Endothelial cell of umbilical vein (primary cell): ENCODE measurements at regions of chr2 and their contacts with region 1.

Region 1: DNA sequence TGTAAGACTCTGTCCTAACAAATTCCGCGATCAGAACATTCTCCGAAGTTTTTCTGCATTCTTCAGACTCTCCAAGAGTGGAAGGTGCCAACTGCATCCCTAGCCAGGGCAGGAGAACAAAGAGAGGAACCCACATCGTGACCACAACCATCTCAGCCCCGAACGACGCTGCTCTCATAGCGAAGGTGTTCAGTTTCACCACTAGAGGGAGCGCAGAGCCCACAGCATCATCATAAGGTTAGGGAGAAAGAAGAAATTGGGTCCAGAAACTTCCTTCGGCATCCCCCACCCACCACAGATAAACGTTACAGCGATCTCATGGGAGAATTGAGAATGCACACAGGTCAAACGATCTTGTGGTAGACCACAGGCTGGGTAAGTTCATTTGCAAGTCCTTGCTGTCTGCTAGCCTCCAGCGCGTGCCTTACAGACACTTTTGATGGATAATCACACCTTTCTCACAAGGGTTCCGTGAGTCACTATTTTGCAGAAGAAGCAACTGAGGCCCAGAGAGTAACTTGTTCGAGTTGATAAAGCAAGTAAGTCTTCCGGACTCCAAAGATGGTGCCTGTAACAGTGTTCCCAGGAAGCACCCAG is 53.7 kb upstream of the ARL4C start:
- DNase-seq: peak; percentile 76
- H3K4me3 ChIP-seq: no peak overlapping the region
- H3K27ac ChIP-seq: no peak overlapping the region
- H3K4me1 ChIP-seq: no peaks in the 10 kb centered on the region
- H3K27me3 ChIP-seq: peaks cover 0 to 6% of the 10 kb centered on the region in 2 experiments
- CTCF ChIP-seq: peak; percentile 84 to 87
- POLR2A ChIP-seq: no peak

Region 2: DNA sequence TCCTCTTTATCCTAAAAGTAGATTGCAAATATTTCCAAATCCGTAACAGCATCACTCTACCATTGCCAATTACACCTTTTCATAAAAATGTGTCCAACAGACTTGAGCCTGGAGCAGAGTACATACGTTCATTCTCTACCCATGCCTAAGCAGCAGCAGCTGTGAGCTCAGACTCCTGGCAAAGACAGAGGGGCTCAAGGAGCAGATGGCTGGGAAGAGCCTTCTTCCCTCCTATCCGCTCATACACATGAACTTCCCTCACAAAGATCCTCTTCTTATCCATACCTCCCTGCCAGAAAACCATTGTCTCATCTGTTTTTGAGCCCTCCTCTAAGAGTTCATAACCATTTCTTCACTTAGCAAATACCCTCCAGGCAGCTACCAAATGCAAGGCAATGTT is 110.6 kb after region 1 on chr2:
- CTCF ChIA-PET with region 1: no interaction called
- POLR2A ChIA-PET with region 1: no interaction called
- dilution Hi-C with region 1: no loop called
- intact Hi-C with region 1: no loop called
- DNase-seq: no peak
- H3K4me3 ChIP-seq: no peak overlapping the region
- H3K27ac ChIP-seq: no peak overlapping the region
- H3K4me1 ChIP-seq: no peaks in the 10 kb centered on the region
- H3K27me3 ChIP-seq: peaks cover 3 to 14% of the 10 kb centered on the region in 2 experiments
- CTCF ChIP-seq: no peak
- POLR2A ChIP-seq: no peak

Region 3: GRCh38 chr2:234690569-234691213 is 140.1 kb after region 1 on chr2:
- CTCF ChIA-PET with region 1: interaction called, 6 read pairs
- POLR2A ChIA-PET with region 1: no interaction called
- dilution Hi-C with region 1: no loop called
- intact Hi-C with region 1: loop called (anchors 2 kb)
- DNase-seq: peak; percentile 97
- H3K4me3 ChIP-seq: no peak overlapping the region
- H3K27ac ChIP-seq: peak overlapping the region; percentile 75
- H3K4me1 ChIP-seq: peaks cover 40% of the 10 kb centered on the region
- H3K27me3 ChIP-seq: no peaks in the 10 kb centered on the region
- CTCF ChIP-seq: no peak
- POLR2A ChIP-seq: no peak

Region 4: GRCh38 chr2:234823877-234824376 is 273.3 kb after region 1 on chr2:
- CTCF ChIA-PET with region 1: interaction called, 5 read pairs
- POLR2A ChIA-PET with region 1: no interaction called
- dilution Hi-C with region 1: no loop called
- intact Hi-C with region 1: loop called (anchors 2 kb)
- DNase-seq: peak; percentile 98
- H3K4me3 ChIP-seq: no peak overlapping the region
- H3K27ac ChIP-seq: peak overlapping the region; percentile 90
- H3K4me1 ChIP-seq: peaks cover 24% of the 10 kb centered on the region
- H3K27me3 ChIP-seq: no peaks in the 10 kb centered on the region
- CTCF ChIP-seq: no peak
- POLR2A ChIP-seq: peak; percentile 69

Region 5: GRCh38 chr2:234898654-234899053 is 348.0 kb after region 1 on chr2:
- CTCF ChIA-PET with region 1: no interaction called
- POLR2A ChIA-PET with region 1: no interaction called
- dilution Hi-C with region 1: no loop called
- intact Hi-C with region 1: no loop called
- DNase-seq: no peak
- H3K4me3 ChIP-seq: no peak overlapping the region
- H3K27ac ChIP-seq: no peak overlapping the region
- H3K4me1 ChIP-seq: no peaks in the 10 kb centered on the region
- H3K27me3 ChIP-seq: peaks cover 0 to 3% of the 10 kb centered on the region in 2 experiments
- CTCF ChIP-seq: no peak
- POLR2A ChIP-seq: no peak

Region 6: DNA sequence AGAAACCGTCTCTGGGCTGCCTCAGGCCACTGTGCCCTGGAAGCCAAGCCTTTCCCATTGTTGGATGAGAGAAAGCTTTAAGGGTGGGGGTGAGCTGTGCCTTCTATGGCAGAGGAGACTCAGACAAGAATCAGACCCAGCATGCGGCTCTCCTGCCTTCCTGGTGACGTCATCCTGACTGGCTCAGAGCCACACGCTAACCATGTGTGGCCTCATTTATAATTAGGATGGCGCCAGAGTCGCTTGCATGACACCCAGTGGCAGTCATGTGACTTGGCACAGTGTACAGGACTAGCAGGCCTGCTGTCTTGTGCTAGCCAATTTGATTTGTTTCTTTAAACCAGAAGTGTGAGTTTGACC is 500.4 kb after region 1 on chr2:
- CTCF ChIA-PET with region 1: interaction called, 7 read pairs
- POLR2A ChIA-PET with region 1: no interaction called
- dilution Hi-C with region 1: no loop called
- intact Hi-C with region 1: loop called (anchors 1 kb)
- DNase-seq: peak; percentile 88
- H3K4me3 ChIP-seq: no peak overlapping the region
- H3K27ac ChIP-seq: peak overlapping the region; percentile 69
- H3K4me1 ChIP-seq: peaks cover 28% of the 10 kb centered on the region
- H3K27me3 ChIP-seq: no peaks in the 10 kb centered on the region
- CTCF ChIP-seq: peak in 1 of 2 donors; percentile 10
- POLR2A ChIP-seq: no peak